Right lobe of liver (tissue), 6 donors: ENCODE measurements at regions of chr3 and their contacts with region 1.

Region 1: GRCh38 chr3:32934150-32934742 is 17.2 kb upstream of the CCR4 start:
- DNase-seq: no peak
- ATAC-seq: peak in 1 of 4 donors; percentile 39
- H3K4me3 ChIP-seq: no peak overlapping the region
- H3K27ac ChIP-seq: no peak overlapping the region
- H3K4me1 ChIP-seq: no peaks in the 10 kb centered on the region
- H3K27me3 ChIP-seq: no peaks in the 10 kb centered on the region
- CTCF ChIP-seq: peak; percentile 48 to 74 (median 71)
- POLR2A ChIP-seq: no peak

Region 2: DNA sequence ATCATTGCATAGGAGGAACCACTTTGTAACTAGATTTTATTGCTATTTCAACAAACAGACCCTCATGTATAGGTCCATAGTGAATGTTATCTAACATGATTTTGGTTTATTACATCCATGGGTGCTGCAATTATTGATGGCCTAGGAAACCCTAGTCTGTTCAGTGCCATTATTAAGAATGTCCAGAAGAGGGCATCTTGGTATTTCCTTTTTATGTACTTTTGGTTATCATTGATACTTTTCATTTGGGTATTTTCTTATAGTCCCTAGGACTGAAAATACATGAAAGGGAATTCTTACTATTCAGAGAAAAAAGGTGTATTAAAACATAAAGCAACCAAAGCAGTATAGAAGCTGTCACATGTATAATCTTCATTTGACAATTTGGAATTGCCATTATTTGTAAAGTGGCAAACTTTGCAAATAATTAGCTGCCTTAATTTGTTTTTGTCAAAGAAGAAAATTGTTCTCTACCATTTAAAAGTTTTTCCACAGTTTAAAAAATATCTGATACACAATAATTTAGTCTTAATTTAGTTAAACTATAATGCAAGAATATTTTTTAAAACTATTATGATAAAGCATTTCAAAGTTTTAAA is 200.5 kb before region 1 on chr3:
- intact Hi-C with region 1: loop called in 1 of 2 experiments (anchors 10 kb)
- DNase-seq: no peak
- ATAC-seq: peak; percentile 48 to 68 (median 62)
- H3K4me3 ChIP-seq: no peak overlapping the region
- H3K27ac ChIP-seq: no peak overlapping the region
- H3K4me1 ChIP-seq: no peaks in the 10 kb centered on the region
- H3K27me3 ChIP-seq: no peaks in the 10 kb centered on the region
- CTCF ChIP-seq: peak; percentile 47 to 65 (median 60)
- POLR2A ChIP-seq: no peak

Region 3: GRCh38 chr3:32848215-32848614 is 86.0 kb before region 1 on chr3:
- intact Hi-C with region 1: no loop called
- DNase-seq: no peak
- ATAC-seq: peak in 2 of 4 donors; percentile 41 to 68
- H3K4me3 ChIP-seq: no peak overlapping the region
- H3K27ac ChIP-seq: no peak overlapping the region
- H3K4me1 ChIP-seq: no peaks in the 10 kb centered on the region
- H3K27me3 ChIP-seq: no peaks in the 10 kb centered on the region
- CTCF ChIP-seq: no peak
- POLR2A ChIP-seq: no peak

Region 4: GRCh38 chr3:33054100-33055092 is 120.2 kb after region 1 on chr3:
- intact Hi-C with region 1: no loop called
- DNase-seq: no peak
- ATAC-seq: peak; percentile 34 to 57 (median 51)
- H3K4me3 ChIP-seq: no peak overlapping the region
- H3K27ac ChIP-seq: no peak overlapping the region
- H3K4me1 ChIP-seq: no peaks in the 10 kb centered on the region
- H3K27me3 ChIP-seq: no peaks in the 10 kb centered on the region
- CTCF ChIP-seq: no peak
- POLR2A ChIP-seq: no peak

Region 5: DNA sequence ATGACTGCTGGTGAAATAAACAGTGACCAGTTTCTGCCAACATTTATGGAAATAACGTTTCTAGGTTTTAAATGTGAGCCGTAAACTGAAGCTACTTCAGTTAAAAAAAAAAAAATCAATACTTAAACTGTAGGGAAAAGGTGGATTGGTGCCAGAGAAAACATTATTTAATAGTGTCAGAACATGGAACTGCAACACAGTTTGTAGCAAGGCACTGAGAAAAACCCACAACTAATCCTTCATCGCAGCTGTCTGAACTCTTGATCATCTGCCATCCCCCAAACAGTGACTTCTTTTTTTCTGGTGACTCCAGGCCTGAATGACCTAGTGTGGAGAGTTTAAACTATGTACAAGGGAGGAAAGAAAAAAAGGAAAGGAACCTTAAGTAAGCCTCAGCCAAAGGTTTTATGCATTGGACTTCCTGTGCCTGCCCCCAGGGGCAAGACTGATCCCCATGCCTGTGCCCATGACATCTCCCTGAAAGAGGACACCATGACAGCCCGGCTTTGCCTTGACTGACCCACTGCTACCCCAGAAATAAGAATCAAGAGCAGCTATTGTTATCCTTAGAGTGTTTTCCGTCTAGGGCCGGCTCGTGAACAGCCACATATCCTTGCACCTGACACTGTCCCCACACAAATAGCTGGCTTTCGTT is 212.7 kb after region 1 on chr3:
- intact Hi-C with region 1: no loop called
- DNase-seq: no peak
- ATAC-seq: peak; percentile 22 to 58 (median 50)
- H3K4me3 ChIP-seq: no peak overlapping the region
- H3K27ac ChIP-seq: no peak overlapping the region
- H3K4me1 ChIP-seq: peaks cover 0 to 11% (median 0%) of the 10 kb centered on the region in 4 donors
- H3K27me3 ChIP-seq: no peaks in the 10 kb centered on the region
- CTCF ChIP-seq: no peak
- POLR2A ChIP-seq: no peak